Right ventricle myocardium inferior (tissue), 1 donor: ENCODE measurements at regions of chr1 and their contacts with region 1.

Region 1: GRCh38 chr1:26145041-26145959 is 13.6 kb upstream of the FAM110D start:
- DNase-seq: peak; percentile 80
- ATAC-seq: peak; percentile 85

Region 2: GRCh38 chr1:25642574-25643108 is 502.7 kb before region 1 on chr1:
- intact Hi-C with region 1: no loop called
- DNase-seq: no peak
- ATAC-seq: no peak

Region 3: DNA sequence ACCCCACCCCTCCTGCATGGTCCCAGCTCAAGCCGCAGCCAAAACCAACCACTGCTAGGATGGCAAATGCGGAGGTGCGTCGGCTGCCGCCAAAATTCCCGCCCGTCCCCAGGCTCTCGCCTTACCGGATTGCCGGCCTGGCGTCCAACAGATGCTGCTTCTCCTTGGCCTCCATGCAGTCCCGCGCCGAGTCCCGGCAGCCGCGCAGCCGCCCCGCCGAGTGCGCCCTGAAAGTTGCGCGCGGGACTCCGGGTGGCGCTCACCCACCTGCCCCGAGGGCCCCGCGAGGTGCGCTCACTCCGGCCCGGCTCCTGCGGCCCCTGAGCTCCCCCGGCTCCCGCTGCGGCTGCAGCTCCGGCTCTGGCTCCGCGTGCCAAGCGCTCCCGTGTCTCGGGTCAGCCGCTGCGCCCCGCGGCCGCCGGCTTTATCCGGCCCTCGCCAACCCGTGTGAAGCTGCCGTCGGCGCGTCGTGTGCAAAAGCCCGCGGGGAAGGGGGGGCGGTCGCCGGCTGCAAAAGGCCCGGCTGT is 99.5 kb before region 1 on chr1 and contains the start of gene SLC30A2:
- intact Hi-C with region 1: no loop called
- DNase-seq: no peak
- ATAC-seq: no peak
- total RNA-seq, gene SLC30A2: 4.0 TPM

Region 4: GRCh38 chr1:26124418-26125331 is 20.6 kb before region 1 on chr1:
- intact Hi-C with region 1: loop called (anchors 1 kb)
- DNase-seq: no peak
- ATAC-seq: no peak

Region 5: DNA sequence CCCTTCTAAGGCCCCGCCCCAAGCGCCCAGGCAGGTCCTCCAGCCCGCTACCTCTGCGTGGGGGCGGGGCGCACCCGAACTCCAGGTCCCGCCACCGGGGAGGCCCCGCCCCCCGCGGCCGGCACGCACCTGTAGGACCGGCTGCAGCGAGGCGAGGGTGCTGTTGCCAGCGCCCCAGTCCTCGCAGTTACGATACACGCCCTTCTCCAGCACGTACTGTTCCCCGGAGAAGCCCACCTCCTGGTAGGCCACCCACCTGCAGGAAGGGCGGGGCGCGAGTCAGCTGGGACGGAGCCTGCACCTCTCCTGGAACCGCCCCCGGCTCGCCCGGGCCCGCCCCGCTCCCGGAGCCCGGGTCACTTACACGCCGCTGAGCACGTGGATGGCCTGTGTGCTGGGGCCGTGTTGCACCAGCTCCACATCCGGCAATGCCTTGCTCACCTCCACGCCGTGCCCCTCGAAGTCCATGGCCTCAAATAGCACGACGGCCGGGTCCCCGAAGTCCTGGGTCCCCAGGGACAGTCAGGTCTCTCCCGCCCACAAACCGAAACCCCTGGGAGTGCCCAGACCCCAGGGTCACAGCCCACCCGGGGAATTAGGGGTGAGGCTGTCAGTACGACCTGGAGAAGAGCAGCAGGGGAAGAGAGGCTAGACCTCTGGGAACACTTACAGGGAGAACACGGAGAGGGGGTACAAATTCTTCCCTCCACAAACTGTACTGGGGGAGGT is 191.3 kb after region 1 on chr1:
- intact Hi-C with region 1: no loop called
- DNase-seq: peak; percentile 92
- ATAC-seq: peak; percentile 63